ENCODE measurements at regions of chr17 and their contacts with region 1.

Region 1: DNA sequence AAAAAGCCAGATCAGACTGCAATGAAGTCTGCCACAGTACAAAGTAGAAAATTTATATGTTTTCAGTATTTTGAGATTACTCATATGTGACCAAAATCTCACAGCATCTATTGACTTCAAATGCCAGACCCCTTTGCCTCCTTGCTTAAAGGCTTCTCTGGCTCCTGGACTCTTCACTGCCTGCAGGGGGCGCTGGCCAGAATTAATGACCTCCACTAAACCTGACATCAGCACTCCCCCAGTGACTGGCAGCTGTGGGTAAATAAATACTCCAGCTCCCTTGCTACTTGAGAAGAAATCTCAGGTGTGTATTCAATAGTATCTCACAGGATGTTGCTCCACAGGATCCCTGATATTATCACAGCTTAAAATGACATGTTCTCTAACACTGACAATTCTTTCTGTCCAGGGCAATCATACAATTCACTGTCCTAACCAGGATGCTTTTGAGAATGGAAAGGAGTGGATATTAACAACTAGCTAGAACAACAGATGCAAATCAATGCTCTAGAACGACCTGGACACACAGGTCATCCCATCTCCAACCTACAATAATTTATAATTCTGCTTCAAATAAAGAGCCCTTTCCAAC is 4.0 kb downstream of the BECN1 start:
- DNase-seq: peak; percentile 38
- H3K4me3 Mint-ChIP-seq: peak overlapping the region; percentile 2
- H3K27ac Mint-ChIP-seq: no peak overlapping the region
- H3K4me1 Mint-ChIP-seq: peaks cover 23% of the 10 kb centered on the region
- H3K27me3 Mint-ChIP-seq: no peaks in the 10 kb centered on the region

Region 2: DNA sequence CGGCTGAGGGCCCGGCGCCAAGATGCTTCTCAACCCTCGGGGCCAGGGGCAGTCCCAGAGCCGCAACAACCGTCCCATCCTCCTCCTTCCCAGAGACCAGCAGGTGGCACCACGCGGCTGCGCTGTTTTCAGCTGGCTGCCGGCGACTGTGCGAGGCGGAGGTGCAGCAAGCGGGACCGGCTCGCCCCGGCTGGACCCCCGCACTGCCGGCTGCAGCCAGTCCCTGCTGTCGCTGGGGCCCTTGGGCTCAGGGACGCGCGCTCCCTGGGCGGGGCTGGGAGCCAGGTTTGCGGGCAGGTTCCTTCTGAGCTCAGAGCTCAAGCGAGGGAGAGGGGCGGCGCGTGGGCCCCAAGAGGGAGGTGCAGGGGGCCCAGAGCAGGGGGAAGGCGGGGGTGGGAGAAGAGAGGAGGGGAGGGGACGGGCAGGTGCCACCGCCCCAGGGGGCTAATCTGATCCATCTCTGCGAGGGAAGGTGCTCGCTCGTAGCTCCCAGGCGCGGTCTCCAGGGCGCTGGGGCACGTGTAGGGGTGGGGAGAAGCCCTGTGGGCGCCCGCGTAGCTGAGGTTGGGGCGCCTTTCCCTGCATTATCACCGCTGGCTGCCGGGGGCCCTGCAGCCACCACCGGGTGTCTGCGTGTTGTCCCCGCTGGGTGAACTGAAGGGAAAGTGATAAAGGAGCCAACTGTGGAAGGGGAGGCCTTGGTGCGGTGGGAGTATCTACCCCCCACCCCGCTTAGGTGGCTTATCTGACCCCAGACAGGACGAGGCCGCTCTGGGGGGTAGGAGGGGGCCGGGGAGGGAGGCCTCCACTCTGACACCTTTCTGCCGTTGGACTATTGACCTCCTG is 507.5 kb before region 1 on chr17:
- intact Hi-C with region 1: no loop called
- DNase-seq: peak; percentile 68
- H3K4me3 Mint-ChIP-seq: peak overlapping the region; percentile 81
- H3K27ac Mint-ChIP-seq: peak overlapping the region; percentile 86
- H3K4me1 Mint-ChIP-seq: peaks cover 86% of the 10 kb centered on the region
- H3K27me3 Mint-ChIP-seq: no peaks in the 10 kb centered on the region

Region 3: GRCh38 chr17:42609182-42609813 is 210.7 kb before region 1 on chr17 and contains the starts of genes RETREG3 and TUBG1:
- intact Hi-C with region 1: loop called (anchors 1 kb)
- DNase-seq: peak; percentile 100
- H3K4me3 Mint-ChIP-seq: peak within 1 kb of the TSS; percentile 100
- H3K27ac Mint-ChIP-seq: peak within 1 kb of the TSS; percentile 94
- H3K4me1 Mint-ChIP-seq: peaks cover 39% of the 10 kb centered on the region
- H3K27me3 Mint-ChIP-seq: no peaks in the 10 kb centered on the region
- total RNA-seq, gene RETREG3: 41.1 and 43.4 TPM in 2 replicates
- total RNA-seq, gene TUBG1: 90.0 and 95.2 TPM in 2 replicates

Region 4: DNA sequence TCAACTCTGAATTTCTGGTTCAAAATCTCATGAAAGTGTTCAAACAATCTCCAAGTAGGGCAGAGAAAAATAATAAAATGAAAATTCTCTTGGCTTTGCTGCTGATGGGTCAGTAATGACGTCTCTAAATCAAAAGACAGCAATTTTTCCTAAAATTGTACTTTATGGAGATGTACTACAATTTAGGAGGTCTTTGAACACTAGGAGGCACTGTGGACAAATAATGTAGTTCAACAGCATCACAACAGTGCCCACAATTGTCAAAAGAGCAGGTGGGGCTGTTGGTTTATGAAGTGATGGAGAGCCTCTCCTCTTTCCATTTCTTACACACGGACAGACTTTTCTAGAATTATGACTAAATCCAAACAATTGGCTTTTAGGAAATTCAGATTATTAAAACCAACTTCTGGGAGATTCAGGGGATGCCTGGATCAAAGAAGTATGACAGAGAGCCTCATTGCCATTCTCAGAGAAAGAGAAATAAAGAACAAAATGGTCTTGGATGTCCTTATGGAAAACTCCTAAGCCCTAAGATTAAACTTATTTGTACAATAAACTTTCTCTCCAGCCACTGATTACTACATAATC is 99.0 kb before region 1 on chr17:
- intact Hi-C with region 1: loop called (anchors 1 kb)
- DNase-seq: peak; percentile 9
- H3K4me3 Mint-ChIP-seq: no peak overlapping the region
- H3K27ac Mint-ChIP-seq: peak overlapping the region; percentile 22
- H3K4me1 Mint-ChIP-seq: peaks cover 5% of the 10 kb centered on the region
- H3K27me3 Mint-ChIP-seq: no peaks in the 10 kb centered on the region

Region 5: GRCh38 chr17:42773290-42774035 is 46.6 kb before region 1 on chr17 and contains the start of gene VPS25:
- intact Hi-C with region 1: loop called (anchors 1 kb)
- DNase-seq: peak; percentile 71
- H3K4me3 Mint-ChIP-seq: peak within 1 kb of the TSS; percentile 99
- H3K27ac Mint-ChIP-seq: peak within 1 kb of the TSS; percentile 96
- H3K4me1 Mint-ChIP-seq: peaks cover 27% of the 10 kb centered on the region
- H3K27me3 Mint-ChIP-seq: no peaks in the 10 kb centered on the region
- total RNA-seq, gene VPS25: 93.6 and 97.0 TPM in 2 replicates

Region 6: GRCh38 chr17:42832974-42833766 is 13.1 kb after region 1 on chr17 and contains the start of gene PSME3:
- intact Hi-C with region 1: loop called (anchors 1 kb)
- DNase-seq: peak; percentile 88
- H3K4me3 Mint-ChIP-seq: peak within 1 kb of the TSS; percentile 90
- H3K27ac Mint-ChIP-seq: peak within 1 kb of the TSS; percentile 93
- H3K4me1 Mint-ChIP-seq: peaks cover 23% of the 10 kb centered on the region
- H3K27me3 Mint-ChIP-seq: peaks cover 3% of the 10 kb centered on the region
- total RNA-seq, gene PSME3: 217 and 220 TPM in 2 replicates

Region 7: GRCh38 chr17:42964161-42964932 is 144.3 kb after region 1 on chr17 and contains the start of gene AARSD1:
- intact Hi-C with region 1: loop called (anchors 10 kb)
- DNase-seq: peak; percentile 90
- H3K4me3 Mint-ChIP-seq: peak within 1 kb of the TSS; percentile 94
- H3K27ac Mint-ChIP-seq: peak within 1 kb of the TSS; percentile 90
- H3K4me1 Mint-ChIP-seq: peaks cover 13% of the 10 kb centered on the region
- H3K27me3 Mint-ChIP-seq: no peaks in the 10 kb centered on the region
- total RNA-seq, gene AARSD1: 78.2 and 85.5 TPM in 2 replicates

Region 8: DNA sequence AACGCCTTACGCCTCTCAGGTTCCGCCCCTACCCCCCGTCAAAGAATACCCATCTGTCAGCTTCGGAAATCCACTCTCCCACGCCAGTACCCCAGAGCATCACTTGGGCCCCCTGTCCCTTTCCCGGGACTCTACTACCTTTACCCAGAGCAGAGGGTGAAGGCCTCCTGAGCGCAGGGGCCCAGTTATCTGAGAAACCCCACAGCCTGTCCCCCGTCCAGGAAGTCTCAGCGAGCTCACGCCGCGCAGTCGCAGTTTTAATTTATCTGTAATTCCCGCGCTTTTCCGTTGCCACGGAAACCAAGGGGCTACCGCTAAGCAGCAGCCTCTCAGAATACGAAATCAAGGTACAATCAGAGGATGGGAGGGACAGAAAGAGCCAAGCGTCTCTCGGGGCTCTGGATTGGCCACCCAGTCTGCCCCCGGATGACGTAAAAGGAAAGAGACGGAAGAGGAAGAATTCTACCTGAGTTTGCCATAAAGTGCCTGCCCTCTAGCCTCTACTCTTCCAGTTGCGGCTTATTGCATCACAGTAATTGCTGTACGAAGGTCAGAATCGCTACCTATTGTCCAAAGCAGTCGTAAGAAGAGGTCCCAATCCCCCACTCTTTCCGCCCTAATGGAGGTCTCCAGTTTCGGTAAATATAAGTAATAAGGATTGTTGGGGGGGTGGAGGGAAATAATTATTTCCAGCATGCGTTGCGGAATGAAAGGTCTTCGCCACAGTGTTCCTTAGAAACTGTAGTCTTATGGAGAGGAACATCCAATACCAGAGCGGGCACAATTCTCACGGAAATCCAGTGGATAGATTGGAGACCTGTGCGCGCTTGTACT is 305.3 kb after region 1 on chr17 and contains the start of gene BRCA1:
- intact Hi-C with region 1: loop called (anchors 1 kb)
- DNase-seq: peak; percentile 93
- H3K4me3 Mint-ChIP-seq: peak within 1 kb of the TSS; percentile 99
- H3K27ac Mint-ChIP-seq: peak within 1 kb of the TSS; percentile 99
- H3K4me1 Mint-ChIP-seq: peaks cover 24% of the 10 kb centered on the region
- H3K27me3 Mint-ChIP-seq: no peaks in the 10 kb centered on the region
- total RNA-seq, gene BRCA1: 76.1 and 79.8 TPM in 2 replicates